ENCODE measurements at regions of chr19 and their contacts with region 1.

Region 1: DNA sequence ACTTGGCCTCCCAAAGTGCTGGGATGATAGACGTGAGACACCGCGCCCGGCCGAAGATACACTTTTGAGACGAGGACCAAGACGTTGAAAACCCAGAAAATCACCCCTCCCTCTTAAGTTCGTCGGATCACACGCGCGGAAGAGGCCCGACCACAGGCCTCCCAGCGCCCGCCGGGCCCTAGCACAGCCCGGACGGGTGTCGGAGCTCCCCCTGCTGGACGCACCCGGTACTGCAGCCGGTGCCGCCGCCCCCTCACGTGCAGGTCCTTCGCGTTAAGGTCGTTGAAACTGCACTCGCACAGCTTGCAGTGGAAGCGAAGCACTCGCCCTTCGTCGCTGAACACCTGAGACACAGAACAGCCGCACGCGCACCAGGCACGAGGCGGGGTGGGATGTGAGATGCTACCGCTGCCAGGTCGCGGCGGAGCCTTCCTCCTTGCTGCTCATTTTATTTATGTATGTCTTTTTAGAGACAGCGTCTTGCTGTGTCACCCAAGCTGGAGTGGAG is 35.7 kb upstream of the MATK start:
- DNase-seq: peak; percentile 96
- H3K4me3 ChIP-seq: peak overlapping the region in 1 of 8 donors; percentile 40
- H3K27ac ChIP-seq: no peak overlapping the region
- H3K4me1 ChIP-seq: peaks cover 0 to 35% (median 17%) of the 10 kb centered on the region in 6 donors
- H3K27me3 ChIP-seq: peaks cover 0 to 12% (median 0%) of the 10 kb centered on the region in 7 donors
- CTCF ChIP-seq: peak; percentile 98 to 100 (median 100)
- POLR2A ChIP-seq: no peak

Region 2: DNA sequence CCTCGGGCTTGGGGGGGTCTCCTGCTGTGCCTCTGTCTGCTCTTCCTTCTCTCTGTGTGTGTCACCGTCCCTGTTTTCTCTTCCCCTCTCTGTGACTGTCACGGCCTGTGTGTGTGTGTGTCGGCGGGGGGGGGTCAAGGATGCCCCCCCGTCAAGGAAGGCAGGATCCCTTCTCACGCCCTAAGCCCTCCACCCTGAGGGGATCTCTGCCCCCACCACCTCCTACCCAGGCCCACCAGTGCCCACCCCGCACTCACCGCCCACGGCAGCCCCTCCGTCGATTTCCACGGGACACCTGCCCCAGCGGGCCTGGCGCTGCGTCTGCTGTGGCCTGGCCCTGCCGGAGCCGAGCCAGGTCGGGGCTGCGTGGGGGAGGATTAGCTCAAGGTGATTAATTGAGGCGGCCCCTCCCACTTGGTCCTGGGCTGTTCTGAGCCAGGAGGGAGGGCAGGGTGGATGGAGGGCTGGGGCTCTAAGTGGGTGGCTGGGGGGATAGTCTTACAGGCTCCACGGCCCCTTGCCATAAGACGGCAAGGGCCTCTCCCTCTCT is 49.9 kb before region 1 on chr19 and contains the start of gene RAX2:
- intact Hi-C with region 1: loop called (anchors 10 kb)
- DNase-seq: no peak
- H3K4me3 ChIP-seq: no peak within 1 kb of the TSS
- H3K27ac ChIP-seq: no peak within 1 kb of the TSS
- H3K4me1 ChIP-seq: peaks cover 0 to 5% (median 0%) of the 10 kb centered on the region in 6 donors
- H3K27me3 ChIP-seq: no peaks in the 10 kb centered on the region
- CTCF ChIP-seq: no peak
- POLR2A ChIP-seq: no peak
- total RNA-seq, gene RAX2: not detected